ENCODE measurements at regions of chr4 and their contacts with region 1.

Region 1: DNA sequence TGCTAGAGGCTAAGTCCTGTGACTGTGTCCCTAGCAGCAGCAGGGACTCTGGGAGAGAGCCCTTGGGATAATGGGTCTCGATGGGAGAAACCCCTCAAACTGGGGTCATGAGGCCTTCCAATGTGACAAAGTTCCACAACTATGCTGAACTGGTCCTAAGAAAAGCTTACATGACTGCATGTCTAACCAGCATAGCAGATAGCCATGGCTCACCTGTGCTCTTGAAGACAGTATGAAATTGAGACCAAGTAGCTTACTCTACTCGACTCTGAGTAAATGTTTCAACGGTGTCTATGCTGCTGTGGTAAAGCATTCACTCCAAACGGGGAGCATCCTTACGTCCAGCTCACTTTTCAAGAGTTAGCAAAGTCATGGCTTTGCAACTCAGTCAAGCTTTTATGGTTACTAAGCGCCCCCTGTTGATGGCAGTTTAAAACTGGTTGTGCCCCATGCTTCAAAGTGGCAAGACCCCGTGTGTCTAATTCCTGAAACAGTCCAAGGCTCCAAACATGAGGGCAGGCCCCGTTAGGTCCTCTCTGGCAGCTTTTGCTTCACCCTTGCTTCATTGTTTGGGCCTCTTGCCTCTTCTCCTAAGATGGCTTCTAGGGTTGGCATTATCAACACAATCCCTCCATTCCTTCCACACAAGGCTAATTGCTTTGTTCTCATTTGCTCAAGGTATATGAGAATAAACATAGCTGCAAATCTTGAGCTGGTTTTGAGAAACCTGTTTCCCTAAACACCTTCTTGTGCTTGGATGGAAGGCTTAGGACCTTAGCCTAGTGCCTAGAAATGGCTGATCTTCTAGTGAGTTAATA is 46.6 kb downstream of the CCNG2 start:
- DNase-seq: peak; percentile 73
- ATAC-seq: peak; percentile 78
- H3K4me3 Mint-ChIP-seq: no peak overlapping the region
- H3K27ac Mint-ChIP-seq: no peak overlapping the region
- H3K4me1 Mint-ChIP-seq: peaks cover 12% of the 10 kb centered on the region
- H3K27me3 Mint-ChIP-seq: peaks cover 9% of the 10 kb centered on the region

Region 2: GRCh38 chr4:77044461-77045150 is 159.0 kb before region 1 on chr4:
- CTCF ChIA-PET with region 1: interaction called, 22 read pairs
- DNase-seq: no peak
- ATAC-seq: peak; percentile 67
- H3K4me3 Mint-ChIP-seq: no peak overlapping the region
- H3K27ac Mint-ChIP-seq: no peak overlapping the region
- H3K4me1 Mint-ChIP-seq: peaks cover 2% of the 10 kb centered on the region
- H3K27me3 Mint-ChIP-seq: no peaks in the 10 kb centered on the region

Region 3: DNA sequence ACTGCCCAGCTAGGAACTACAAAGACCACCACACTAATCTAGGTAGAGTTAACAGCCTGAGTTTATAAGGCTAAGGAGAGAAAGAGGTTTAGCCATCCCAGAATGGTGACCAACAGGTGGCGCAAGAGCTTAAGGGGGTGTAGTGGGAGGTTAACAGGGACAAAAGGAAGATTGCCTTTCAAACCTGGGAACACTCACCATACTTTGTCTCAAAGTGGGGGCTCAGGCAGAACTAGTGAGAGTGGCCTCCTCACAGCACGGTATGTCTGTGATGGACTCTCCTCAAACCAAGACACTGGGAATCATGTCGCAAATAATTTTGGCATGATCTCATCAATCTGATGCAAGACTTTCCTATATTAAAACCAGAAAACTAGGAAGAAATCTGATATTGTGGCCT is 151.2 kb before region 1 on chr4:
- CTCF ChIA-PET with region 1: interaction called, 22 read pairs
- DNase-seq: peak; percentile 66
- ATAC-seq: no peak
- H3K4me3 Mint-ChIP-seq: no peak overlapping the region
- H3K27ac Mint-ChIP-seq: no peak overlapping the region
- H3K4me1 Mint-ChIP-seq: peaks cover 2% of the 10 kb centered on the region
- H3K27me3 Mint-ChIP-seq: no peaks in the 10 kb centered on the region

Region 4: GRCh38 chr4:77095101-77095821 is 108.3 kb before region 1 on chr4:
- CTCF ChIA-PET with region 1: interaction called, 150 read pairs
- DNase-seq: peak; percentile 83
- ATAC-seq: peak; percentile 100
- H3K4me3 Mint-ChIP-seq: no peak overlapping the region
- H3K27ac Mint-ChIP-seq: no peak overlapping the region
- H3K4me1 Mint-ChIP-seq: peaks cover 11% of the 10 kb centered on the region
- H3K27me3 Mint-ChIP-seq: no peaks in the 10 kb centered on the region

Region 5: DNA sequence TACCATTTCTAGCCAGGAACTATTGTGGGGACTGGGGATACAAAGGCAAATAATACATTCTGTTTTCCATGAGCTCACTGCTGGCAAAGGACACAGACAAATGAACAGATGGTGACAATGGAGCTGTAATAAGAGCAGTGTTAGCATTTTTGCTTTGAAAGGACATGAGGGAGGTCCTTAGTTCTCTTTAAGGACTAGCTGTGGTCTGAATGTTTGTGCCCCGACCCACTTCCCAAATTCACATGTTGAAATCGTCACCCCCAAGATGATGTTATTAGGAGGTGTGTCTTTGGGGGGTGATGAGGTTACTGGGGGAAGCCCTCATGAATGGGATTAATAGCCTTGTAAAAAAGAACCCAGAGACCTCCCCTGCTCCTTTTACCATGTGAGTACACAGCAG is 16.3 kb before region 1 on chr4:
- CTCF ChIA-PET with region 1: interaction called, 13 read pairs
- DNase-seq: no peak
- ATAC-seq: no peak
- H3K4me3 Mint-ChIP-seq: no peak overlapping the region
- H3K27ac Mint-ChIP-seq: no peak overlapping the region
- H3K4me1 Mint-ChIP-seq: no peaks in the 10 kb centered on the region
- H3K27me3 Mint-ChIP-seq: peaks cover 23% of the 10 kb centered on the region

Measured in activated CD8-positive, alpha-beta memory T cell treated with anti-CD3 and anti-CD28 coated beads, Interleukin-2, amount 10 ng/mL, durations not matched to agents 7 days and 5 days (primary cell).